Transverse colon (tissue), 4 donors: ENCODE measurements at regions of chr11 and their contacts with region 1.

Region 1: GRCh38 chr11:74255741-74256369 is 55.6 kb downstream of the P4HA3 start:
- DNase-seq: peak; percentile 47
- H3K4me3 ChIP-seq: no peak overlapping the region
- H3K27ac ChIP-seq: no peak overlapping the region
- H3K4me1 ChIP-seq: peaks cover 0 to 7% (median 2%) of the 10 kb centered on the region in 4 donors
- H3K27me3 ChIP-seq: no peaks in the 10 kb centered on the region
- CTCF ChIP-seq: peak; percentile 89 to 94 (median 92)
- EP300 ChIP-seq: no peak
- POLR2A ChIP-seq: no peak

Region 2: DNA sequence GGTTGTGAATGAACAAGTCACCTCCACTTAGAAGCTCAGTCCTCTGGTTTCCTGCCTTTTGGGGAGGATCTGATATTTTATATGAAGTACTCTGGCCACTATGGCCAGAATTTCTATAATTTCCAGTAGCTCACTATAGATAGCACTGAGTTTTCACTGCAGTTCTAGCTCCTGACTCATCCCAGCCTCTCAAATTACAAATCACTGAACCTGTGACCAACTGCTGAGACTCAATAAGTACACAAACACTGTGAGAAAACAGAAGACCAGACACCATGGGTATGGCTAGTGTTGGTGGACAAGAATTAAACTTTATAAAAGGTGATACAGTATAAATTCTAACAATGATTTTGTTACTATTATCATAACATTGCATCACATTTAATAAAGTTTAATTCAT is 199.9 kb before region 1 on chr11:
- in situ Hi-C with region 1: no loop called
- intact Hi-C with region 1: no loop called
- DNase-seq: no peak
- H3K4me3 ChIP-seq: no peak overlapping the region
- H3K27ac ChIP-seq: no peak overlapping the region
- H3K4me1 ChIP-seq: no peaks in the 10 kb centered on the region
- H3K27me3 ChIP-seq: no peaks in the 10 kb centered on the region
- CTCF ChIP-seq: no peak
- EP300 ChIP-seq: no peak
- POLR2A ChIP-seq: no peak

Region 3: DNA sequence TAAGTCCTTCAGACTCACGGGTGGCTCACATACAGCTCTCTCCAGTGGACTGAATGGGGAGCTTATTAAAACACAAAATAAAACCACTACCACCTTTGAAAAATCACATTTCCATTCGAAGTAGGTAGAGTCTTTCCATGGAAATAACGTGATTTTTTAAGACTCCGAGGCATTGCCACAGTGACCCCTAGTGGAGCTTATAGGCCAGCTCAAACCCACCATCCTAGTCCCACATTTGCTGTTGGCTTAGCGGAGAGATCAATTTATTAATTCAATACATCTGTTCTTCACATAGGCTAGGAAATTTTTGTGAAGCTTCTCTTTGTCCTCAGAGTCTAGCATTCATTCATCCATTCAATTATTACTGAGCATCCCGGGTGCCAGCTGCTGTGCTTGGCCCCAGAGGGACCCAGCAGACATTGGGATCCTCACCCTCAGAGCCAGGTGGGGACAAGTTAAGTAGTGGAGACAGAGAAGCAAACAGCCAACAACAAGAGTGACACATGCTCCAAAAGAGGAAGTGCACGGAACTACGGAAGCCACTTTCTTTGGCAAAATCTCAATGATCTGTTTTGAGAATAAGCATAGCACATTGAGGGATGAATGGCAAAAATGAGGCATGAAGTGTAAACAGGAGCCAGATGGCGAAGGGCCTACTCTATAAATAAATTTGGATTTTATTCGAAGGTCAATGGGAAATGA is 65.8 kb after region 1 on chr11:
- in situ Hi-C with region 1: no loop called
- intact Hi-C with region 1: loop called (anchors 2 kb)
- DNase-seq: no peak
- H3K4me3 ChIP-seq: no peak overlapping the region
- H3K27ac ChIP-seq: no peak overlapping the region
- H3K4me1 ChIP-seq: peaks cover 4 to 19% (median 5%) of the 10 kb centered on the region in 4 donors
- H3K27me3 ChIP-seq: no peaks in the 10 kb centered on the region
- CTCF ChIP-seq: peak; percentile 8 to 55 (median 45)
- EP300 ChIP-seq: no peak
- POLR2A ChIP-seq: no peak

Region 4: DNA sequence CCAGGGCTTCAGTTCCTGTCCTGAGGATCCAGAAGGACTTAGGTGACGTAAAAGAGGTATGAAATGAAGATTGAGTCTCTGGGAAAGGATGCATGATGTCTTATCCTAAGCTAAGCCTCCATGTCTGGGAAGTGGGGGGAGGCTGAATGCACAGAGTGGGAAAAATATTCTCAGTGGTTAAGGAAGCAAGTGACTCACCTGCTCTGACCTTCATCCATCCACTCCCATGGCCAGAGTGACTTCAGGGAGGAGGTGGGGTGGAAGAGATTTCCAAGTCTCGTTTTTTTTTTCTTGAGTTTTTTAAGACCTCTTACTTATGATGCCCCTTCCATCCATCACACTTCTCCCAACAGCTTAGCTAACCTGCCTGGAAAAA is 304.1 kb after region 1 on chr11:
- in situ Hi-C with region 1: loop called in 2 of 4 experiments (anchors 10 to 25 kb)
- intact Hi-C with region 1: no loop called
- DNase-seq: no peak
- H3K4me3 ChIP-seq: no peak overlapping the region
- H3K27ac ChIP-seq: no peak overlapping the region
- H3K4me1 ChIP-seq: no peaks in the 10 kb centered on the region
- H3K27me3 ChIP-seq: no peaks in the 10 kb centered on the region
- CTCF ChIP-seq: no peak
- EP300 ChIP-seq: no peak
- POLR2A ChIP-seq: no peak

Region 5: GRCh38 chr11:74570266-74571061 is 314.6 kb after region 1 on chr11:
- in situ Hi-C with region 1: loop called in 2 of 4 experiments (anchors 10 to 25 kb)
- intact Hi-C with region 1: no loop called
- DNase-seq: peak; percentile 66
- H3K4me3 ChIP-seq: no peak overlapping the region
- H3K27ac ChIP-seq: peak overlapping the region in 3 of 4 donors; percentile 63 to 73 (median 65)
- H3K4me1 ChIP-seq: peaks cover 0 to 34% (median 20%) of the 10 kb centered on the region in 4 donors
- H3K27me3 ChIP-seq: no peaks in the 10 kb centered on the region
- CTCF ChIP-seq: peak; percentile 56 to 87 (median 67)
- EP300 ChIP-seq: no peak
- POLR2A ChIP-seq: no peak